ENCODE measurements at regions of chr15 and their contacts with region 1.

Region 1: GRCh38 chr15:45522328-45523160 is at the start of gene SLC30A4:
- DNase-seq: peak; percentile 93
- H3K4me3 ChIP-seq: peak within 1 kb of the TSS; percentile 73 to 92 (median 79)
- H3K27ac ChIP-seq: peak within 1 kb of the TSS; percentile 69 to 89 (median 86)
- H3K4me1 ChIP-seq: peaks cover 8 to 58% (median 31%) of the 10 kb centered on the region in 6 donors
- H3K27me3 ChIP-seq: peaks cover 0 to 22% (median 0%) of the 10 kb centered on the region in 7 donors
- CTCF ChIP-seq: peak in 9 of 11 experiments; percentile 20 to 68 (median 55)
- POLR2A ChIP-seq: peak in 1 of 3 donors; percentile 74
- total RNA-seq, gene SLC30A4: 6.8 to 11.8 (median 8.9) TPM

Region 2: DNA sequence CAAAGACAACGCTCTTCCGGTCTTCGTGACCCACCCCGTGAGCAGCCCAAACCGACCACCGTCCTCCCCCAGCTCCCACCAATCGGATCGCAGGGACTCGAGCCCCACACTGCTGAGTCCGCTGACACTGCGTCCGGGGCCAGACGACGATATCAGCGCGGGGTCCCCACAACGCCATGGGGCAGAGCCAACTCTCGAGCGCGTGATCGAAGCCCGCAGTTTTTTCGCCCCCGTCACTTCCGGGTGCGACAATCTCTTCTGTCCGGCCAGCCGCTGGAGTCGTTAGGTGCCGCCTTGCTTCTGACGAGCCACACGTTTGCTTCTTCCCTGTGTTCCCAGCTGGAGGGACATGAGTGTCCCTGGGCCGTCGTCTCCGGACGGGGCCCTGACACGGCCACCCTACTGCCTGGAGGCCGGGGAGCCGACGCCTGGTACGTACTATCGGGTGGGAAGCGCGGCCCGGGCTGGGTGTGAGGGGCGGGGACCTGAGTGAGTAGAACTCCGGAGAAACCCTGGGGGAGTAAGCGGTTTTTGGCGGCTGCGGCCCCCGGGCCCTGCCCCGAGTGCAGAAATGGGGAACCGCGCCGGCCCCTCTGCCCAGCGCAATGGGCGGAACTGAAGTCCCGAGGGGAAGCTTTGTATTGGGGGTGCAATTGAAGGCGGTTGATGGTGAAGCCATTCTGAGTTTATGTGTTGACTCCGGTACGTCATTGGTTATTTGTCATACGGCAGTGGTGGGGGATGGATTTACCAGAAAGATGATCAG is 64.7 kb after region 1 on chr15 and contains the start of gene BLOC1S6:
- intact Hi-C with region 1: loop called (anchors 10 kb)
- DNase-seq: peak; percentile 96
- H3K4me3 ChIP-seq: peak within 1 kb of the TSS; percentile 58 to 91 (median 68)
- H3K27ac ChIP-seq: peak within 1 kb of the TSS; percentile 96 to 100 (median 99)
- H3K4me1 ChIP-seq: peaks cover 33 to 78% (median 58%) of the 10 kb centered on the region in 6 donors
- H3K27me3 ChIP-seq: no peaks in the 10 kb centered on the region
- CTCF ChIP-seq: no peak
- POLR2A ChIP-seq: peak in 2 of 3 donors; percentile 37 to 65
- total RNA-seq, gene BLOC1S6: 43.1 to 67.3 (median 50.7) TPM

Measured in spleen (tissue), 13 donors.